Body of pancreas (tissue), 4 donors: ENCODE measurements at regions of chr17 and their contacts with region 1.

Region 1: GRCh38 chr17:56715613-56716357 is 117.9 kb downstream of the C17orf67 start:
- DNase-seq: peak; percentile 79 to 84 (median 81)
- ATAC-seq: peak; percentile 87
- H3K4me3 ChIP-seq: no peak overlapping the region
- H3K27ac ChIP-seq: no peak overlapping the region
- H3K4me1 ChIP-seq: no peaks in the 10 kb centered on the region
- H3K27me3 ChIP-seq: no peaks in the 10 kb centered on the region
- CTCF ChIP-seq: peak; percentile 51 to 77 (median 72)
- POLR2A ChIP-seq: no peak

Region 2: DNA sequence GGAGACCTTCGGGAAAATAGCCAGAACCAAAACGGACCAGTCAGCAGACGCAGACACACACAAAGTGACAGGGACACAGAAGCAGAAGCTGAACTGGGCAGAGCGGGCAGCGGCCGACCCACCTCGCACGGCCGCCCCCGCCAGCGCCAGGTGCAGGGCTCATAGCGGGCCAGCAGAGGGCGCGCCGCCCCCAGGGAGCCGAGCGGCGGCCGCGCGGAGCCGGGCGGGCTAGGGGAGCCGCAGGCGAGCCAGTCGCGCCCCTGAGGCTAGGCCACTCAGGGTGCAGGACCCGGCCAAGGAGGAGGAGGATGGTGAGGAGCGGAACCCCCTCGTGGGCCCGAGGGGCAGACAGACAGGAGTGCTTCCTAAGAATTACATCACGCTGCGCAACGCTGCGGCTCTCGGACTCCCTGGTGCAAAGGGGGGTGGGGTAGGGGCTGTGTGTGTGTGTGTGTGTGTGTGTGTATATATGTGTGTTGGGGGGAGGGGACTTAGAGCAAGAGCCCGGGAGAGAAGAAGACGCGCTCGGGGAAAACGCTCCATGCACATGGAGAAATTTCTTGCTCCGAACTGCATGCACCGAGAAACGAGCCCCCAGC is 123.2 kb before region 1 on chr17:
- intact Hi-C with region 1: loop called (anchors 5 kb)
- DNase-seq: peak; percentile 35 to 62 (median 44)
- ATAC-seq: peak; percentile 54
- H3K4me3 ChIP-seq: no peak overlapping the region
- H3K27ac ChIP-seq: no peak overlapping the region
- H3K4me1 ChIP-seq: peaks cover 43% of the 10 kb centered on the region
- H3K27me3 ChIP-seq: peaks cover 0 to 9% of the 10 kb centered on the region in 2 donors
- CTCF ChIP-seq: peak; percentile 55 to 99 (median 86)
- POLR2A ChIP-seq: no peak

Region 3: GRCh38 chr17:56604691-56605290 is 111.0 kb before region 1 on chr17:
- intact Hi-C with region 1: no loop called
- DNase-seq: no peak
- ATAC-seq: no peak
- H3K4me3 ChIP-seq: no peak overlapping the region
- H3K27ac ChIP-seq: no peak overlapping the region
- H3K4me1 ChIP-seq: no peaks in the 10 kb centered on the region
- H3K27me3 ChIP-seq: peaks cover 0 to 6% of the 10 kb centered on the region in 2 donors
- CTCF ChIP-seq: no peak
- POLR2A ChIP-seq: no peak